Gastrocnemius medialis (tissue), 4 donors: ENCODE measurements at regions of chr16 and their contacts with region 1.

Region 1: DNA sequence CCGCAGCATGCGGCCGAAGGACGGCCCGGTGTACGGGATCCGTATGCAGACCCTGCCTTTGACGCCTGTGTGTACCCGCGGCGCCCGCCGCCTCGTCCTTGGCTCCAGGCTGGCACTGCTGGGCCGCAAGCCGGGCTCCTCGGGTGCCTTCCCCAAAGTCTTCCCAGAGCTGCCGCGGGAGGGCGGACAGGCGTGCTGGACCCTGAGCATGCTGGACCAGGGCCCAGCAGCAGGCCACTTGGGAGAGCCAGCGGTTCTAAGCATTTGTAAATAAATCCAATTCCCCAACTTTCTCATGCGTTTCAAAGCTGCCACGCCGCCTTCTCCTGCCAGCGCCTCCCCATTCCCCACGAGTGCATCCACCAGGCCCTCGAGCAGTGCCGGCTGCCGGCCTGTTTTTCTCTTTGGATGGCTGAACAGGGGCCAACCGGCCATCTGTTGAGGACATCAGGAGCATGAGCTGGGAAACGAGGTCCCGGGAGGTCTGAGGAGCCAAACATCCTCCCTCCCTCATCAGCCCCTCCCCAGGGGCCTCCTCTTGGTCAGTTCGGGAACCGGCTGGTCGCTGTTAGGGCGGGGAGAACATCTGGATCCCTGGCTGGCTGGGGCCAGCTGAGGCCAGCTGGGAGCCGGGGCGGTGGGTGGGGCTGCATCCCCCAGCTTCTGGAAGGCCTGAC is 20.5 kb upstream of the PABPN1L start:
- DNase-seq: peak; percentile 60 to 72
- ATAC-seq: peak; percentile 16 to 18
- H3K4me3 ChIP-seq: no peak overlapping the region
- H3K27ac ChIP-seq: peak overlapping the region; percentile 69 to 97 (median 90)
- H3K4me1 ChIP-seq: peaks cover 61 to 67% of the 10 kb centered on the region in 2 donors
- H3K27me3 ChIP-seq: no peaks in the 10 kb centered on the region
- CTCF ChIP-seq: peak in 2 of 5 experiments; percentile 29 to 40
- POLR2A ChIP-seq: no peak

Region 2: GRCh38 chr16:88920618-88921590 is 33.9 kb after region 1 on chr16:
- in situ Hi-C with region 1: no loop called
- intact Hi-C with region 1: loop called (anchors 2 kb)
- DNase-seq: peak in 1 of 2 donors; percentile 59
- ATAC-seq: peak; percentile 45 to 51
- H3K4me3 ChIP-seq: peak overlapping the region in 3 of 4 donors; percentile 15 to 28 (median 25)
- H3K27ac ChIP-seq: peak overlapping the region; percentile 53 to 75 (median 66)
- H3K4me1 ChIP-seq: peaks cover 33 to 40% of the 10 kb centered on the region in 2 donors
- H3K27me3 ChIP-seq: no peaks in the 10 kb centered on the region
- CTCF ChIP-seq: no peak
- POLR2A ChIP-seq: no peak

Region 3: GRCh38 chr16:88941913-88942909 is 55.2 kb after region 1 on chr16:
- in situ Hi-C with region 1: no loop called
- intact Hi-C with region 1: loop called (anchors 5 kb)
- DNase-seq: no peak
- ATAC-seq: peak; percentile 29 to 33
- H3K4me3 ChIP-seq: peak overlapping the region; percentile 36 to 63 (median 40)
- H3K27ac ChIP-seq: no peak overlapping the region
- H3K4me1 ChIP-seq: peaks cover 18% of the 10 kb centered on the region in 2 donors
- H3K27me3 ChIP-seq: peaks cover 10 to 29% (median 25%) of the 10 kb centered on the region in 3 donors
- CTCF ChIP-seq: peak in 4 of 5 experiments; percentile 58 to 86 (median 66)
- POLR2A ChIP-seq: no peak